ENCODE measurements at regions of chr10 and their contacts with region 1.

Region 1: GRCh38 chr10:72048450-72049124 is 39.8 kb downstream of the SPOCK2 start:
- DNase-seq: peak; percentile 89
- ATAC-seq: peak; percentile 67
- H3K4me3 ChIP-seq: no peak overlapping the region
- H3K27ac ChIP-seq: no peak overlapping the region
- H3K4me1 ChIP-seq: peaks cover 72% of the 10 kb centered on the region
- H3K27me3 ChIP-seq: no peaks in the 10 kb centered on the region
- CTCF ChIP-seq: peak; percentile 99
- EP300 ChIP-seq: 0 out of 4 replicates have a peak, but pooled peaks of 1 of the 2 experiments have one; percentile 20
- POLR2A ChIP-seq: no peak
- RAD21 ChIP-seq: peak; percentile 98

Region 2: GRCh38 chr10:71343392-71343773 is 705.2 kb before region 1 on chr10:
- CTCF ChIA-PET with region 1: no interaction called
- POLR2A ChIA-PET with region 1: no interaction called
- in situ Hi-C with region 1: loop called (anchors 25 kb)
- intact Hi-C with region 1: no loop called
- DNase-seq: peak; percentile 74
- ATAC-seq: peak; percentile 7; the same call in 2 of the 3 replicates
- H3K4me3 ChIP-seq: no peak overlapping the region
- H3K27ac ChIP-seq: peak overlapping the region; percentile 92
- H3K4me1 ChIP-seq: peaks cover 100% of the 10 kb centered on the region
- H3K27me3 ChIP-seq: no peaks in the 10 kb centered on the region
- CTCF ChIP-seq: no peak
- EP300 ChIP-seq: no peak
- POLR2A ChIP-seq: no peak
- RAD21 ChIP-seq: no peak; the same call in 1 of the 2 replicates

Region 3: GRCh38 chr10:71597821-71598498 is 450.6 kb before region 1 on chr10:
- CTCF ChIA-PET with region 1: no interaction called
- POLR2A ChIA-PET with region 1: no interaction called
- in situ Hi-C with region 1: no loop called
- intact Hi-C with region 1: no loop called
- DNase-seq: peak; percentile 28
- ATAC-seq: peak; percentile 73
- H3K4me3 ChIP-seq: 0 out of 6 replicates have a peak overlapping the region, but pooled peaks of 1 of the 3 experiments have one; percentile 3
- H3K27ac ChIP-seq: no peak overlapping the region
- H3K4me1 ChIP-seq: peaks cover 24% of the 10 kb centered on the region
- H3K27me3 ChIP-seq: no peaks in the 10 kb centered on the region; a peak in 1 of 5 replicates
- CTCF ChIP-seq: no peak
- EP300 ChIP-seq: no peak
- POLR2A ChIP-seq: no peak
- RAD21 ChIP-seq: no peak

Region 4: GRCh38 chr10:71850637-71851464 is 197.7 kb before region 1 on chr10 and contains the start of gene PSAP:
- CTCF ChIA-PET with region 1: no interaction called
- POLR2A ChIA-PET with region 1: no interaction called
- in situ Hi-C with region 1: no loop called
- intact Hi-C with region 1: no loop called
- DNase-seq: peak; percentile 95
- ATAC-seq: peak; percentile 94
- H3K4me3 ChIP-seq: peak within 1 kb of the TSS; percentile 74 to 84 (median 81)
- H3K27ac ChIP-seq: peak within 1 kb of the TSS; percentile 76
- H3K4me1 ChIP-seq: peaks cover 53% of the 10 kb centered on the region
- H3K27me3 ChIP-seq: peaks cover 3% of the 10 kb centered on the region in 2 experiments; a peak in 2 of 5 replicates
- CTCF ChIP-seq: no peak
- EP300 ChIP-seq: no peak
- POLR2A ChIP-seq: peak; percentile 98 to 99
- RAD21 ChIP-seq: peak; percentile 58; the same call in 1 of the 2 replicates
- total RNA-seq, gene PSAP: 148 and 323 TPM in 2 replicates

Region 5: DNA sequence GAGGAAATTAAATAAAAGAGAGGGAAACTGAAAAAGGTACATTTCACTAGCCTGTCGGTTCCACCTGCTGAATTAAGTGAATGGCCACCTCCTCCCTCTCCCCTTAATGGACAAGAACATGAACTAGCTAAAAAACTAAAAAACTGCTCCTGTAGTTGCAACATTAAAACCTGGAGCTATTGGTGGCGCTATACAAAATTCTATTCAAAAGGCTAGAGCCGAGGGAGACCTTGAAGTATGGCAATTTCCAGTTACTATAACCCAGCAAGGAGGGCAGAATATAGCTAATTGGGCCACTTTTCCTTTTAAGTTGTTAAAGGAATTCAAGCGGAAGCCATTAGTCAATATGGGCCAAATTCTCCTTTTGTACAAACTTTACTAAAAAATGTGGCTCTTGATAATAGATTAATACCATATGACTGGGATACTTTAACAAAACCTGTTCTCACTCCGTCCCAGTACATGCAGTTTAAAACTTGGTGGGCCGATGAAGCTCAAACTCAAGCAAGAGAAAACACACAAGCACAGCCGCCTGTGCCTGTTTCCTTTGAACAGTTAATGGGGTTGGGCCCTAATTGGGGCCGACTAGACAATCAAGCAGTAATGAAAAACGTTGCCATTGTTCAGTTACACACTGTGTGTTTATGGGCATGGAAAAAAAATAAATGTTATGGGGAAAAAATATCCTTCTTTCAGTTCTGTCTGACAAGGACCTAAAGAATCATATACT is 90.9 kb before region 1 on chr10:
- CTCF ChIA-PET with region 1: interaction called, 46 read pairs
- POLR2A ChIA-PET with region 1: interaction called, 30 read pairs
- in situ Hi-C with region 1: no loop called
- intact Hi-C with region 1: loop called (anchors 1 kb)
- DNase-seq: peak; percentile 44
- ATAC-seq: no peak
- H3K4me3 ChIP-seq: no peak overlapping the region
- H3K27ac ChIP-seq: no peak overlapping the region
- H3K4me1 ChIP-seq: peaks cover 29% of the 10 kb centered on the region
- H3K27me3 ChIP-seq: no peaks in the 10 kb centered on the region
- CTCF ChIP-seq: peak; percentile 26
- EP300 ChIP-seq: no peak
- POLR2A ChIP-seq: no peak
- RAD21 ChIP-seq: no peak

Region 6: DNA sequence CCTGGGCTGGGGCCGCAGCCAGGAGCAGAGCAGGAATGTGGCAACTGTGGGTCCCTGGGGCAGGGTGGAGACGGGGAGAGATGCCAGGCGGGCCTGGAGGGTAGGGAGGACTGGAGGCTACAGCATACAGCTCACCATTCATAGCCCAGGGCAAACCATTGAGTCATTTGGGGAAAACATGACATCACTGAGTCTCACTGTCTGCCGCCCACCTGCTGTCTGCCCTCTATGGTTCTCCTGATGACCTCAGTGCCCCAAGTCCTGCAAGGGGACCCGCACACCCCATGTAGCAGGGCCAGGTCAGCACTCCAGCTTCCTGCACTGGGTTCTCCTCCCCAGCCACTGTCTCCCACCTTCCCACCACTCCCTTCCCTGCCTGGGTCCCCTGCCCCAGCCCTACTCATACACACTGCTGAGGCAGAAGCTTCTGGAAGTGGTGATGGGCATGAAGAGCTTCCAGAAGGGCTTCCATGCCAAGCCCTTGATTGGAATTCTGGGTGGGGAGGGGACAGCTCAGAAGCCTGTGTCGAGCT is 74.0 kb before region 1 on chr10:
- CTCF ChIA-PET with region 1: interaction called, 4 read pairs
- POLR2A ChIA-PET with region 1: interaction called, 12 read pairs
- in situ Hi-C with region 1: loop called (anchors 5 kb)
- intact Hi-C with region 1: no loop called
- DNase-seq: no peak
- ATAC-seq: no peak
- H3K4me3 ChIP-seq: no peak overlapping the region
- H3K27ac ChIP-seq: peak overlapping the region; percentile 91
- H3K4me1 ChIP-seq: peaks cover 71% of the 10 kb centered on the region
- H3K27me3 ChIP-seq: no peaks in the 10 kb centered on the region
- CTCF ChIP-seq: no peak
- EP300 ChIP-seq: no peak
- POLR2A ChIP-seq: no peak
- RAD21 ChIP-seq: no peak

Region 7: GRCh38 chr10:72002354-72003295 is 46.0 kb before region 1 on chr10:
- CTCF ChIA-PET with region 1: no interaction called
- POLR2A ChIA-PET with region 1: no interaction called
- in situ Hi-C with region 1: no loop called
- intact Hi-C with region 1: no loop called
- DNase-seq: no peak
- ATAC-seq: no peak
- H3K4me3 ChIP-seq: no peak overlapping the region
- H3K27ac ChIP-seq: no peak overlapping the region
- H3K4me1 ChIP-seq: peaks cover 35% of the 10 kb centered on the region
- H3K27me3 ChIP-seq: no peaks in the 10 kb centered on the region
- CTCF ChIP-seq: no peak
- EP300 ChIP-seq: no peak
- POLR2A ChIP-seq: no peak
- RAD21 ChIP-seq: no peak

Region 8: GRCh38 chr10:72016608-72017312 is 31.8 kb before region 1 on chr10:
- CTCF ChIA-PET with region 1: interaction called, 12 read pairs
- POLR2A ChIA-PET with region 1: interaction called, 3 read pairs
- in situ Hi-C with region 1: no loop called
- intact Hi-C with region 1: no loop called
- DNase-seq: no peak
- ATAC-seq: peak; percentile 68
- H3K4me3 ChIP-seq: peak overlapping the region; percentile 16 to 61 (median 20); a peak in 3 of 6 replicates
- H3K27ac ChIP-seq: peak overlapping the region; percentile 39
- H3K4me1 ChIP-seq: peaks cover 66% of the 10 kb centered on the region
- H3K27me3 ChIP-seq: no peaks in the 10 kb centered on the region
- CTCF ChIP-seq: no peak
- EP300 ChIP-seq: no peak
- POLR2A ChIP-seq: no peak
- RAD21 ChIP-seq: no peak

Region 9: GRCh38 chr10:72223743-72224101 is 175.1 kb after region 1 on chr10:
- CTCF ChIA-PET with region 1: interaction called, 4 read pairs
- POLR2A ChIA-PET with region 1: interaction called, 4 read pairs
- in situ Hi-C with region 1: no loop called
- intact Hi-C with region 1: loop called (anchors 5 kb)
- DNase-seq: no peak
- ATAC-seq: no peak
- H3K4me3 ChIP-seq: no peak overlapping the region
- H3K27ac ChIP-seq: no peak overlapping the region
- H3K4me1 ChIP-seq: peaks cover 20% of the 10 kb centered on the region
- H3K27me3 ChIP-seq: no peaks in the 10 kb centered on the region
- CTCF ChIP-seq: no peak
- EP300 ChIP-seq: no peak
- POLR2A ChIP-seq: no peak
- RAD21 ChIP-seq: no peak

Measured in HepG2 (cell line).